ENCODE measurements at regions of chr3 and their contacts with region 1.

Region 1: GRCh38 chr3:15557511-15557946 is 36.0 kb upstream of the COLQ start:
- DNase-seq: peak; percentile 35
- CTCF ChIP-seq: peak; percentile 38

Region 2: DNA sequence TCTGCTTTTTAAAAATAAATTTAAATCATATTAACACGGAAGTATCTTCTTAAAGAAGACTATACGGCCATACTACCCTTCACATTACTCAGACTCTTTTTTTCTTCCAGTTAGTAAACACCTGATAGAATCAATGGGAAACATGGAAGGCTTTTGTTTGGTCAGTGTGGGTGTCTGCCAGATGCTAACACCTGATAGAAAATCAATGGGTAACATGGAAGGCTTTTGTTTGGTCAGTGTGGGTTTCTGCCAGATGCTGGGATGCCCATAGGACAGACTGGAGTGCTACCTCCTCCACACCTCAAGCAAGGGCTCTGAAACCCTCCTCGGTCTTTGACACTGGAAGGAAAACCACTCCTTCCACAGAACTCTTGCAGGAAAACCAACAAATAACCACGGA is 14.6 kb after region 1 on chr3:
- CTCF ChIA-PET with region 1: interaction called, 18 read pairs
- POLR2A ChIA-PET with region 1: no interaction called
- DNase-seq: no peak
- CTCF ChIP-seq: no peak

Region 3: GRCh38 chr3:15758295-15758694 is 200.8 kb after region 1 on chr3:
- CTCF ChIA-PET with region 1: no interaction called
- POLR2A ChIA-PET with region 1: no interaction called
- DNase-seq: no peak
- CTCF ChIP-seq: no peak

Region 4: GRCh38 chr3:15839568-15839967 is 282.0 kb after region 1 on chr3:
- CTCF ChIA-PET with region 1: no interaction called
- POLR2A ChIA-PET with region 1: no interaction called
- DNase-seq: no peak
- CTCF ChIP-seq: no peak